Activated T-helper 1 cell treated with anti-CD3 and anti-CD28 coated beads, Interleukin-12 subunit alpha, Interleukin-12 subunit beta, Interleukin-2, Interleukin-4 antibody, amounts not matched to agents 30 ng/mL and 10 ng/mL and 1 ng/mL, durations not matched to agents 14 hours and 24 hours and 36 hours (primary cell): ENCODE measurements at regions of chr2 and their contacts with region 1.

Region 1: GRCh38 chr2:203014456-203015199 is at the start of gene NBEAL1:
- DNase-seq: peak; percentile 97
- H3K4me3 Mint-ChIP-seq: peak within 1 kb of the TSS; percentile 94
- H3K27ac Mint-ChIP-seq: peak within 1 kb of the TSS; percentile 87
- H3K4me1 Mint-ChIP-seq: peaks cover 31% of the 10 kb centered on the region
- H3K27me3 Mint-ChIP-seq: peaks cover 4% of the 10 kb centered on the region
- total RNA-seq, gene NBEAL1: 9.2 and 10.7 TPM in 2 replicates

Region 2: GRCh38 chr2:202700075-202700901 is 314.3 kb before region 1 on chr2:
- intact Hi-C with region 1: loop called (anchors 1 kb)
- DNase-seq: no peak
- H3K4me3 Mint-ChIP-seq: no peak overlapping the region
- H3K27ac Mint-ChIP-seq: peak overlapping the region; percentile 45
- H3K4me1 Mint-ChIP-seq: peaks cover 39% of the 10 kb centered on the region
- H3K27me3 Mint-ChIP-seq: no peaks in the 10 kb centered on the region

Region 3: DNA sequence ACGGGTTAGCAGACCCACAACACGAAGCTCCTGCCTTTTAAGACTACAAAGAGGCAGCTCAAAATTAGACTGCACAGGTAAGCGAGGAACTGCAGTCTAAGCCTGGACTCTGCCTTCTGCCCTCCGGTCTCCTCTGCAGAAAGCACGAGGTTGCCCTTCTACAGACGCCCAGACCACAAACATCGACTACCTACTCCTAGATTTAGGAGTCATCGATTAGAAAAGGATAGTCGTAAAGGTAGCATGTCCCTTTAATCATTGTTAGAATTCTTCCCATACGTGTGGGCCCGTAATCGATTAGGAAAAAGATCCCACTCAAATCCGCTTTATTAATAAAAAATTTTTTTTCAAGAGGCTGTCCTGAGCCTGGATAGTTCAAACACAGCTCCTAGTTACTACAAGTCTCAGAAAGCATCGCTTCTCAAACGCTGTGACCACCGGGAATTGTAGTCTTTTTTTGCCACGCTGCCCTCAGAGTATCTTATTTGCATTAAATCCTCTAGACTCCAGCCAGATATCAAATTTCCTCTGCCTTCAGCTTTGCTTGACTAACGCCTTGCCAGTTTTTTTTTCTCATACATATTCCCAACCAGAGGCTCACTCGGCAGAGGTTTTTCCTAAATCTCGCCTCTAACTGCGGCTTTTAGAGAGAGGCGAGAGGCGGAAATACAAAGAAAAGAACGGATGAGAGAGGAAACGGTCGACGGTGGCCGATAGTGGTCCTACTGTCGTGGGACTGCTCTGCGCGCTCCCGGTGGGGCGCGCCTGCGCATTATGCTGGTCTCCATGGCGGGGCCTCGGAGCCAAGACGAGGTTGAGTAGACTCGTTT is 102.9 kb before region 1 on chr2 and contains the starts of genes CARF and WDR12:
- intact Hi-C with region 1: loop called (anchors 1 kb)
- DNase-seq: peak; percentile 87
- H3K4me3 Mint-ChIP-seq: peak within 1 kb of the TSS; percentile 96
- H3K27ac Mint-ChIP-seq: peak within 1 kb of the TSS; percentile 98
- H3K4me1 Mint-ChIP-seq: peaks cover 31% of the 10 kb centered on the region
- H3K27me3 Mint-ChIP-seq: no peaks in the 10 kb centered on the region
- total RNA-seq, gene CARF: 3.6 and 4.3 TPM in 2 replicates
- total RNA-seq, gene WDR12: 149 and 165 TPM in 2 replicates

Region 4: GRCh38 chr2:202989749-202990148 is 24.9 kb before region 1 on chr2:
- intact Hi-C with region 1: no loop called
- DNase-seq: no peak
- H3K4me3 Mint-ChIP-seq: no peak overlapping the region
- H3K27ac Mint-ChIP-seq: no peak overlapping the region
- H3K4me1 Mint-ChIP-seq: no peaks in the 10 kb centered on the region
- H3K27me3 Mint-ChIP-seq: no peaks in the 10 kb centered on the region

Region 5: DNA sequence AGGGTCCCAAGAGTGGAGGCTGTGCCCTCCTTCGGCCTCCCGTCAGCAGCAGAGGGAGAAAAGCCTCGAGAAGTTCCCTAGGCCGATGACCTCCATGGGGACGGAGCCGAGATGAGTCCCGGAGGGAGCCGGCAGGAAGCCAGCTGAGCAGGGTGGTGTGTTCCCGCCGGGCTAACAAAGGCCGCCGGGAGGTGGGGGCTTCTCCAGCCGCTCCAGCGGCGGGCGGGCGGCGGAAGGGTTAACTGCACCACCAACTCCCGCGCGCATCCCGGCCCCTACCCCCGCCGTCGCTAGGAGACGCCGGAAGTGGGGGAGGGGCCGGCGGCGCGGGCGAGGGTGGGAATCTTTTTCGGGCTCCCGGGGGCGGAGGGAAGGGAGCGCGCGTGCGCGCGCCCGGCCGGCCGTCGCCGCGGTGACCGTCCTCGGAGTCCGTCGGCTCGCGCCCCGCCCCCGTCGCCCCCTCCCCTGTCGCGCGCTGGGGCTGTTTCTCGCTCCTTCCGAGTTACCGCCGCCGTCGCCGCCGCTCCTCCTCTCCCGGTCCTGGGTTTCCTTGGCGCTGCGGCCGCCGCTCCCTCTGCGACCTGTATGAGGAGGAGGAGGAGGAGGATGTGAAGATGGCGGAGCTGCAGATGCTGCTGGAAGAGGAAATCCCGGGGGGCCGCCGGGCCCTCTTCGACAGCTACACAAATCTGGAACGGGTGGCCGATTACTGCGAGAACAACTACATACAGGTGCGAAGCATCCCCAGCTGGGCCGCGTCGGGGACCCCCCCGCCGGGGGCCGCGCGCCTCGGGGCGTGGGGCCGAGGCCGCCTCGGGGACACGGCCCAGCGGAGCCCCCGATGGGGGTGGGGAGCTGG is 313.5 kb after region 1 on chr2 and contains the start of gene ABI2:
- intact Hi-C with region 1: loop called (anchors 5 kb)
- DNase-seq: peak; percentile 60
- H3K4me3 Mint-ChIP-seq: peak within 1 kb of the TSS; percentile 94
- H3K27ac Mint-ChIP-seq: peak within 1 kb of the TSS; percentile 91
- H3K4me1 Mint-ChIP-seq: peaks cover 34% of the 10 kb centered on the region
- H3K27me3 Mint-ChIP-seq: no peaks in the 10 kb centered on the region
- total RNA-seq, gene ABI2: 31.4 and 32.3 TPM in 2 replicates

Region 6: GRCh38 chr2:203934041-203934492 is 919.4 kb after region 1 on chr2:
- intact Hi-C with region 1: loop called (anchors 5 kb)
- DNase-seq: peak; percentile 39
- H3K4me3 Mint-ChIP-seq: peak overlapping the region; percentile 73
- H3K27ac Mint-ChIP-seq: peak overlapping the region; percentile 93
- H3K4me1 Mint-ChIP-seq: peaks cover 59% of the 10 kb centered on the region
- H3K27me3 Mint-ChIP-seq: no peaks in the 10 kb centered on the region